ENCODE measurements at regions of chr14 and their contacts with region 1.

Region 1: GRCh38 chr14:21014761-21015190 is 10.1 kb downstream of the NDRG2 start:
- DNase-seq: peak; percentile 80
- ATAC-seq: peak; percentile 97
- H3K4me3 ChIP-seq: no peak overlapping the region
- H3K27ac ChIP-seq: no peak overlapping the region
- H3K4me1 ChIP-seq: peaks cover 0 to 4% of the 10 kb centered on the region in 2 experiments; a peak in 1 of 4 replicates
- H3K27me3 ChIP-seq: peaks cover 18% of the 10 kb centered on the region; the same call in 1 of the 2 replicates
- CTCF ChIP-seq: peak; percentile 86 to 95 (median 95)
- POLR2A ChIP-seq: no peak
- RAD21 ChIP-seq: peak; percentile 94

Region 2: DNA sequence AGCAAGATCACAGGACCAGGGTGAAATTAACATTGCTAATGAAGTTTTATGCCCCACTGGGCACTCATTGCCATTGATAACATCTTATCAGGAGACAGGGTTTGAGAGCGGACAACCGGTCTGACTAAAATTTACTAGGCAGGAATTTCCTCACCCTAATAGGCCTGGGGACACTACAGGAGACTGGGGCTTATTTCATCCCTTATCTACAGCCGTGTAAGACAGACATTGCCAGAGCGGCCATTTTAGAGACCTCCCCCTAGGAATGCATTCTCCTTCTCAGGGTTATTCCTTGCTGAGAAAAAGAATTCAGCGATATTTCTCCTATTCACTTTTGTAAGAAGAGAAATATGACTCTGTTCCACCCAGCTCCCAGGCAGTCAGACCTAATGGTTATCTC is 896.0 kb before region 1 on chr14:
- CTCF ChIA-PET with region 1: no interaction called
- POLR2A ChIA-PET with region 1: no interaction called
- RAD21 ChIA-PET with region 1: no interaction called
- intact Hi-C with region 1: no loop called
- DNase-seq: no peak
- ATAC-seq: no peak
- H3K4me3 ChIP-seq: no peak overlapping the region
- H3K27ac ChIP-seq: no peak overlapping the region
- H3K4me1 ChIP-seq: no peaks in the 10 kb centered on the region
- H3K27me3 ChIP-seq: no peaks in the 10 kb centered on the region
- CTCF ChIP-seq: no peak
- POLR2A ChIP-seq: no peak
- RAD21 ChIP-seq: no peak

Region 3: GRCh38 chr14:20818861-20819260 is 195.9 kb before region 1 on chr14:
- CTCF ChIA-PET with region 1: no interaction called
- POLR2A ChIA-PET with region 1: no interaction called
- RAD21 ChIA-PET with region 1: no interaction called
- intact Hi-C with region 1: no loop called
- DNase-seq: no peak
- ATAC-seq: peak; percentile 57
- H3K4me3 ChIP-seq: no peak overlapping the region
- H3K27ac ChIP-seq: no peak overlapping the region
- H3K4me1 ChIP-seq: peaks cover 2 to 28% of the 10 kb centered on the region in 2 experiments; a peak in 2 of 4 replicates
- H3K27me3 ChIP-seq: no peaks in the 10 kb centered on the region
- CTCF ChIP-seq: peak; percentile 16 to 20 (median 19); a peak in 2 of 6 replicates
- POLR2A ChIP-seq: no peak
- RAD21 ChIP-seq: no peak

Region 4: DNA sequence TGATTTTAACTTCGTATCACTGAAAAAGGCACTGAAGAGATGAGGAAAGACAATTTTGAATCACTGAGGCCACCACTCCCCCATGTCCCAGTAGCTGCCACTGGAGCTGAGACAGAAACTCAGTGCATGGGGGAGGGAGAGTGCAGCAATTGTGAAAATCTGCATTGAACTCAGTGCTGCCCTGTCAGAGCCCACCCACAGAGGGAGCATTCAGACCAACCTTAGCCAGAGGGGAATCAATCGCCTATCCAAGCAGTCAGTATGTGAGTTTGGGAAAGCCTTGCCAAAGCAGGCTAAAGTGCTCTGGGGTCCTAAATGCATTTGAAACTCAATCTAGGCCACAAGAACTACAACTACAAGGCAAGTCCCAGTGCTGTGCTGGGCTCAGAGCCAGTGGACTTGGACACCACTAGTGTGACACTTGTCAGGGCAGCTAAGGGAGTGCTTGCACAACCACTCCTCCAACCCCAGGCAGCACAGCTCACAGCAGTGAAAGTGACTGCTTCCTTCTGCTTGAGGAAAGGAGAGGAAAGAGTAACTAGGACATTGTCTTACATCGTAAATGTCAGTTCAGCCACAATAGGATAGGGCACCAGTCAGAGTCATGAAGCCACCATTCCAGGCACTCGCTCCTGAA is 110.3 kb before region 1 on chr14:
- CTCF ChIA-PET with region 1: no interaction called
- POLR2A ChIA-PET with region 1: no interaction called
- RAD21 ChIA-PET with region 1: no interaction called
- intact Hi-C with region 1: no loop called
- DNase-seq: no peak
- ATAC-seq: peak; percentile 52; the same call in 1 of the 2 replicates
- H3K4me3 ChIP-seq: no peak overlapping the region
- H3K27ac ChIP-seq: no peak overlapping the region
- H3K4me1 ChIP-seq: no peaks in the 10 kb centered on the region
- H3K27me3 ChIP-seq: peaks cover 33% of the 10 kb centered on the region; the same call in 1 of the 2 replicates
- CTCF ChIP-seq: 0 out of 6 replicates have a peak, but pooled peaks of 1 of the 3 experiments have one; percentile 11
- POLR2A ChIP-seq: no peak
- RAD21 ChIP-seq: no peak

Region 5: DNA sequence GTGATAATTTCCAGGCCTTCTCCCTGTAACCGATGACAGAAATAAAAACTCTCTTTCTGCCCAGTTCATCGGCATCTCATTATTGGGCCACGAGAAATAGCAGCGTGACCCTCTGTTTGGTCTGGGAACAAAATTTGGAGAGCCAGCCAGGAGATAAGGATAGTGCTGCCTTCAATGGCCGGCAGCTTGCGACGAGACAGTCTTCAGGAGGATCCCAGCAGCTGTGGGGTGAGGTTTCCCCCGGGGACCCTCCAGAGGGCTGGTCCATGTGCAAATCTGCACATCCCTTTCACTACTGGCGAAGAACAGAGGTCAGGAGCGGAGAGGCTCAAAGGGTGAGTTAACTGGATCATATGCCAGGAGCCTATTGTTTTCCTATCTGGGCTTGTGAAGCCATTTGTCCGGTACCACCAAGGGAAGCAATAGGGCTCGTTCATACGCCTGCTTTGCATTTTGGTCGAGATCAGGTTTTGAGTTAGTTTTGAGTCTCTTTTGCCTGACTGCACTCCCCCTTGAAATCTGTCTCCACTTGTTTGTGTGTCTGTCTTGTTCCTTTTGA is 10.9 kb before region 1 on chr14:
- CTCF ChIA-PET with region 1: interaction called, 53 read pairs
- POLR2A ChIA-PET with region 1: no interaction called
- RAD21 ChIA-PET with region 1: interaction called in 1 of 2 experiments, 7 read pairs
- intact Hi-C with region 1: no loop called
- DNase-seq: no peak
- ATAC-seq: no peak
- H3K4me3 ChIP-seq: no peak overlapping the region
- H3K27ac ChIP-seq: no peak overlapping the region
- H3K4me1 ChIP-seq: peaks cover 4 to 10% of the 10 kb centered on the region in 2 experiments; a peak in 3 of 4 replicates
- H3K27me3 ChIP-seq: no peaks in the 10 kb centered on the region
- CTCF ChIP-seq: no peak
- POLR2A ChIP-seq: no peak
- RAD21 ChIP-seq: no peak

Region 6: DNA sequence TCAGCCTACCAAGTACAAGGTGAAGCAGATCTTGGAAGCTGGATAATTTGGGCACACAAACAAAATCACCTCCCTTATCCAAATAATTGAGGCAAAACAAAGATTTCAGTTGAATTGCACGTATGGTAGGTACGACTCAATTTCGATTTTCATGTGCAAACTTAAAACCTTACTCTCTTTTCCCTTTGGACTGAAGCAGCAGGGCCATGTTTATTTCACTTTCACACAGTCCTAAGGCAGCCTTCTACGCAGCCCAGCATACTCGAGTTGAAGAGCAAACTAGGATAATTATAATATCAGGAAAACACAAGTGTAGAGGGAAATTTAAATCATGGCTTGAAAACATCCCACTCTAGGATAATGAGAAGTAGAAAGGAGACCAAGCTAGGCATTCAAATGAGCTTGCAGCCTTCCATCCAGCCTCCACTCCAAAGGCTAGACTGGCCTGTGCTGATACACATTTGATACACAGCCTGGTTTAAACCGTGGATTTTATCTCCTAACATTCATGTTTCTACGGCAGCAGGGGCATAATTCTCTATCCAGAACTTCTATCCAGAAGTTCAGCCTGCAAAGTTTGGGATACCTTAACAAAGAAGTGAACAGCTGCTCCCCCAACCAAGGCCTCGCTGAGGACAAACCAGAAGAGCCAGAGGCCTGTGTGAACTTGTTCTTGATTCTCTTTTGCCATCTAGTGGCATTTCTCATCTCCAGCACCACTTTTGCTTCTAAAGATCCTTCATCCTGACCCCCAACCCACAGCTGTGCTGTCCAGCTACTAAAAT is 25.0 kb after region 1 on chr14:
- CTCF ChIA-PET with region 1: interaction called, 148 read pairs
- POLR2A ChIA-PET with region 1: interaction called, 6 read pairs
- RAD21 ChIA-PET with region 1: interaction called, 24 to 30 read pairs
- intact Hi-C with region 1: loop called (anchors 1 kb)
- DNase-seq: peak; percentile 41
- ATAC-seq: peak; percentile 92
- H3K4me3 ChIP-seq: no peak overlapping the region
- H3K27ac ChIP-seq: no peak overlapping the region
- H3K4me1 ChIP-seq: peaks cover 0 to 7% of the 10 kb centered on the region in 2 experiments; a peak in 1 of 4 replicates
- H3K27me3 ChIP-seq: no peaks in the 10 kb centered on the region
- CTCF ChIP-seq: peak; percentile 58 to 61 (median 60); a peak in 5 of 6 replicates
- POLR2A ChIP-seq: no peak
- RAD21 ChIP-seq: peak; percentile 77

Region 7: DNA sequence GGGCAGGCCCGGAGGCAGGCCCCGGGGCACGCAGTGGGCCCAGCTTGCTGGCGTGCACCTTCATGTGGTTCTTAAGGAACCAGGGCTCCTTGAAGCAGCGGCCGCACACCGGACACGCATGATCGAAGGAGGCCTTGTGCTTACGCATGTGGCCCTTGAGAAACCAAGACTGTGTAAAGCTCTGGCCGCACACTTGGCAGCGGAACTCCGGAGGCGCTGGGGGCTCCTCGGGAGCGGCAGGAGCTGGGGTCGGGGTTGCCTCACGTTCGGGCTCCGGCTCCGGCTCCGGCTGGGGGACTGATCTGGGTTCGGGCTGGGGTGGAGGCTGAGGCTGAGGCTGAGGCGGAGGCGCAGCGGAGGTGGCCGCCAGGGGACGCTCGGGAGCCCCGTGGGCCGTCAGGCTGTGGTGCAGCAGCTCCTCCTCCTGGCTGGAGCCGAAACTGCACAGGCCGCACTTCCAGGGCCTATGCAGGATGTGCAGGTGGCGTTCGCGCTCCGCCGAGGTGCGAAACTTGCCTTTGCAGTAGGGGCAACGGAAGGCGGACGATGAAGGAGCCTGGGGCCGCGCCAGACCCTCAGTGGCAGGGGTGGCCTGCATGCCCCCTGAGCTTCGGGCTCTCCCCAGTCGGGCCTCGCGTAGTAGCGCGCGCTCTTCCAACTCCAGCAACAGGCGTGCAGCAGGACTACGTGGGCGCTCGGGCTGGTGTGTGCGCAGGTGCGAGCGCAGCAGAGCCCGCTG is 77.7 kb after region 1 on chr14:
- CTCF ChIA-PET with region 1: interaction called, 35 read pairs
- POLR2A ChIA-PET with region 1: interaction called, 4 read pairs
- RAD21 ChIA-PET with region 1: interaction called in 1 of 2 experiments, 4 read pairs
- intact Hi-C with region 1: loop called (anchors 1 kb)
- DNase-seq: peak; percentile 40
- ATAC-seq: peak; percentile 85
- H3K4me3 ChIP-seq: no peak overlapping the region
- H3K27ac ChIP-seq: no peak overlapping the region; the same call in 1 of the 2 replicates
- H3K4me1 ChIP-seq: peaks cover 0 to 12% of the 10 kb centered on the region in 2 experiments
- H3K27me3 ChIP-seq: no peaks in the 10 kb centered on the region
- CTCF ChIP-seq: peak; percentile 99 to 100 (median 100)
- POLR2A ChIP-seq: no peak
- RAD21 ChIP-seq: peak; percentile 91

Region 8: GRCh38 chr14:21557084-21557901 is 542.5 kb after region 1 on chr14:
- CTCF ChIA-PET with region 1: interaction called, 5 read pairs
- POLR2A ChIA-PET with region 1: no interaction called
- RAD21 ChIA-PET with region 1: no interaction called
- intact Hi-C with region 1: loop called (anchors 10 kb)
- DNase-seq: peak; percentile 83
- ATAC-seq: peak; percentile 87
- H3K4me3 ChIP-seq: peak overlapping the region; percentile 10 to 47
- H3K27ac ChIP-seq: no peak overlapping the region
- H3K4me1 ChIP-seq: peaks cover 5 to 9% of the 10 kb centered on the region in 2 experiments; a peak in 3 of 4 replicates
- H3K27me3 ChIP-seq: no peaks in the 10 kb centered on the region
- CTCF ChIP-seq: peak; percentile 56 to 90 (median 74); a peak in 5 of 6 replicates
- POLR2A ChIP-seq: no peak
- RAD21 ChIP-seq: peak; percentile 77